HCT116 (cell line): ENCODE measurements at regions of chr12 and their contacts with region 1.

Region 1: GRCh38 chr12:76348079-76348901 is at the start of gene BBS10:
- DNase-seq: peak; percentile 83
- ATAC-seq: peak; percentile 91
- H3K4me3 ChIP-seq: peak within 1 kb of the TSS; percentile 77 to 88
- H3K27ac ChIP-seq: peak within 1 kb of the TSS; percentile 86
- H3K4me1 ChIP-seq: peaks cover 23 to 48% of the 10 kb centered on the region in 2 experiments; a peak in 3 of 4 replicates
- H3K27me3 ChIP-seq: no peaks in the 10 kb centered on the region
- CTCF ChIP-seq: peak; percentile 33 to 63 (median 49); a peak in 4 of 6 replicates
- POLR2A ChIP-seq: peak; percentile 5
- RAD21 ChIP-seq: peak; percentile 44
- total RNA-seq, gene BBS10: 27.1 TPM

Region 2: GRCh38 chr12:75390899-75391538 is 957.3 kb before region 1 on chr12 and contains the start of gene GLIPR1L2:
- CTCF ChIA-PET with region 1: no interaction called
- POLR2A ChIA-PET with region 1: no interaction called
- RAD21 ChIA-PET with region 1: no interaction called
- intact Hi-C with region 1: loop called (anchors 10 kb)
- DNase-seq: peak; percentile 98
- ATAC-seq: peak; percentile 94
- H3K4me3 ChIP-seq: peak within 1 kb of the TSS; percentile 49 to 63
- H3K27ac ChIP-seq: peak within 1 kb of the TSS; percentile 77
- H3K4me1 ChIP-seq: peaks cover 26 to 46% of the 10 kb centered on the region in 2 experiments
- H3K27me3 ChIP-seq: no peaks in the 10 kb centered on the region
- CTCF ChIP-seq: peak; percentile 61 to 94 (median 84); a peak in 5 of 6 replicates
- POLR2A ChIP-seq: peak; percentile 23
- RAD21 ChIP-seq: peak; percentile 73
- total RNA-seq, gene GLIPR1L2: 0.44 TPM

Region 3: DNA sequence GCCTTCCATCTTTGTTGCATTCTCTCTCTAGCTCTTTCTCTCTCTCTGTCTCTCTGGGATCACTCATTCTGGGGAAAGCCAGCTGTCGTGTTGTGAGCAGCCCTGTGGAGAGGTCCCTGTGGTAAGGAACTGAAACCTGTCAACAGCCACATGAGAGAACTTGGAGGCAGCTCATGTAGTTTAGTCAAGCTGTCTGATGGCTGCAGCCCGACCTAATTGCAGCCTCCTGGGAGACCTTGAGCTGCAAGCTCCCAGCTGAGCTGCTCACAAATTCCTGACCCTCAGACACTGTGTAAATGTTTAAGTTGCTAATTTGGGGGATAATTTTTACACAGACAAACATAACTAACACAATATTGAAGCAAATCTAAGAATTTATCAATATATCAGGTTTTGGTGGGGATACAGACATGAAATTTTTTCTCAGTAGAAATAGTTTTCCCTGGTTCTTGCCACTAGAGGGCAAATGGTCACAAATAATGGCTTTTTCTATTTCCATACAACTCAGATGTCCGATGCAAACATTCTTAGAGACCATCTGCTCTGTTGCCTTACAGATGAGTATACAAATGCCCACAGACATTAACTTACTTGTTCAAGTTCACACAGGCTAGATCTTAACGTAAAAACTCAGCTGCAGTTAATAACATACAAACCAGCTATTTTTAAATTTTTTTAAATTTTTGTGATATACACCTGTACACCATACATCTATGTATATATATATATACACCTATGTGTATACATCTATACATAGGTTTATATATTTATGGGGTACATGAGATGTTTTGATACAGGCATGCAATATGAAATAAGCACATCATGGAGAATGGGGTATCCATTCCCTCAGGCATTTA is 821.4 kb before region 1 on chr12:
- CTCF ChIA-PET with region 1: interaction called, 3 read pairs
- POLR2A ChIA-PET with region 1: interaction called, 3 read pairs
- RAD21 ChIA-PET with region 1: interaction called in 1 of 2 experiments, 3 read pairs
- intact Hi-C with region 1: loop called (anchors 5 kb)
- DNase-seq: peak; percentile 40
- ATAC-seq: peak; percentile 76
- H3K4me3 ChIP-seq: no peak overlapping the region
- H3K27ac ChIP-seq: peak overlapping the region; percentile 72
- H3K4me1 ChIP-seq: peaks cover 17 to 35% of the 10 kb centered on the region in 2 experiments
- H3K27me3 ChIP-seq: no peaks in the 10 kb centered on the region
- CTCF ChIP-seq: peak; percentile 62 to 77 (median 68); a peak in 5 of 6 replicates
- POLR2A ChIP-seq: no peak
- RAD21 ChIP-seq: peak; percentile 95

Region 4: DNA sequence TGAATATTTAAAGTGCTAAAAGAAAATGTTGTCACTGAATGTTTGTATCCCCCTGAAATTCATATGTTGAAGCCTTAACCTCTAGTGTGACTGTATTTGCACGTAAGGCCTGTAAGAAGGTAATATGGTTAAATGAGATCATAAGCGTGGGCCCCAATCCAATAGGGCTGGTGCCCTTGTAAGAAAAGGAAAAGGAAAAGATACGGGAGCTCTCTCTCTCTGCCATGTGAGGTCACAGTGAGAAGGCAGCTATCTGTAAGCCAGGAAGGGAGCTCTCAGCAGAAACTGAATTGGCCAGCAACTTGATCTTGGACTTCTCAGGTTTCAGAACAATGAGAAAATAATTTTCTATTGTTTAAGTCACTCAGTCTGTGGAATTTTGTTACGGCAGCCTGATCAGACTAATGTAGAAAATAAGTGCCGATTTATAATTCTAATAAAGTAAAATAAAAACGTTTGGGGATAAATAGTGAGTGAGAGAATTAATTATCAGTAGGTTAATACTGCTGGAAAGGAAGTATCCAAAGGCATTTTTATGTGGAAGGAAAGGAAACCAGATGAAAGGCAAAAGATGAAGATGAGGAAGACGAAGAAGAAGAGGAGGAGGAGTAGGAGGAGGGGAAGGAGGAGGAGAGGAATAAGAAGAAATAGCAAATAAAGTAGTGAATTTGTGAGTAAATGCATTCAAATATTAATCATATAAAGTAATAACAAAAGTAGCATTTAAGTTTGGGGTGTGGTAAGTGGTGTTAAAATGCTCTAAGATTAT is 648.4 kb before region 1 on chr12:
- CTCF ChIA-PET with region 1: no interaction called
- POLR2A ChIA-PET with region 1: no interaction called
- RAD21 ChIA-PET with region 1: no interaction called
- intact Hi-C with region 1: loop called (anchors 5 kb)
- DNase-seq: no peak
- ATAC-seq: peak; percentile 27
- H3K4me3 ChIP-seq: 0 out of 4 replicates have a peak overlapping the region, but pooled peaks of 1 of the 2 experiments have one; percentile 17
- H3K27ac ChIP-seq: peak overlapping the region; percentile 100
- H3K4me1 ChIP-seq: peaks cover 92 to 100% of the 10 kb centered on the region in 2 experiments
- H3K27me3 ChIP-seq: no peaks in the 10 kb centered on the region
- CTCF ChIP-seq: no peak
- POLR2A ChIP-seq: peak; percentile 2
- RAD21 ChIP-seq: peak; percentile 24; the same call in 1 of the 2 replicates

Region 5: GRCh38 chr12:76055393-76055792 is 292.9 kb before region 1 on chr12:
- CTCF ChIA-PET with region 1: no interaction called
- POLR2A ChIA-PET with region 1: no interaction called
- RAD21 ChIA-PET with region 1: no interaction called
- intact Hi-C with region 1: loop called (anchors 10 kb)
- DNase-seq: no peak
- ATAC-seq: no peak
- H3K4me3 ChIP-seq: no peak overlapping the region
- H3K27ac ChIP-seq: no peak overlapping the region
- H3K4me1 ChIP-seq: no peaks in the 10 kb centered on the region
- H3K27me3 ChIP-seq: no peaks in the 10 kb centered on the region
- CTCF ChIP-seq: no peak
- POLR2A ChIP-seq: no peak
- RAD21 ChIP-seq: no peak

Region 6: DNA sequence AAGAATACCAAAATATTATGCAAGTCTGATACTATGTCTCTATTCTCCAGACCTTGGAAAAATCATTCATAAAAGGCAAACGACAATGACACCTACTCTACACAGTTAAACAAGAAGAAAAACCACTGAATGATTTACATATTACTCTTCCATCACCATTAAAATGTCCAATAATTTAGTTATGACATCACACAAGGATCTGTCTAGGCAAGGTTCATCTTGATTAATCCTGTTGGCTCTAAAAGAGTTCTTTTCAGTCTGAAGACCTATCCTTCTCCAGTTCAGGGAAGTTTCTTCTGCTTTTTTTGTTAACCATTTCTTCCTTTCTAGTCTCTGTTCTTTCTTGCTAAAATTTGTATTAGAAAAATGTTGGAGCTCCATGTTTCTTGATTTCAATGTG is 147.3 kb after region 1 on chr12:
- CTCF ChIA-PET with region 1: no interaction called
- POLR2A ChIA-PET with region 1: no interaction called
- RAD21 ChIA-PET with region 1: no interaction called
- intact Hi-C with region 1: no loop called
- DNase-seq: no peak
- ATAC-seq: no peak
- H3K4me3 ChIP-seq: no peak overlapping the region
- H3K27ac ChIP-seq: no peak overlapping the region
- H3K4me1 ChIP-seq: no peaks in the 10 kb centered on the region
- H3K27me3 ChIP-seq: no peaks in the 10 kb centered on the region
- CTCF ChIP-seq: no peak
- POLR2A ChIP-seq: no peak
- RAD21 ChIP-seq: no peak

Region 7: GRCh38 chr12:76790564-76791552 is 442.6 kb after region 1 on chr12:
- CTCF ChIA-PET with region 1: no interaction called
- POLR2A ChIA-PET with region 1: no interaction called
- RAD21 ChIA-PET with region 1: no interaction called
- intact Hi-C with region 1: loop called (anchors 5 kb)
- DNase-seq: peak; percentile 6
- ATAC-seq: peak; percentile 42; the same call in 1 of the 2 replicates
- H3K4me3 ChIP-seq: no peak overlapping the region
- H3K27ac ChIP-seq: no peak overlapping the region
- H3K4me1 ChIP-seq: no peaks in the 10 kb centered on the region
- H3K27me3 ChIP-seq: no peaks in the 10 kb centered on the region
- CTCF ChIP-seq: peak; percentile 41 to 68 (median 62); a peak in 4 of 6 replicates
- POLR2A ChIP-seq: no peak
- RAD21 ChIP-seq: peak; percentile 83